Mammary epithelial cell (primary cell): ENCODE measurements at regions of chr11 and their contacts with region 1.

Region 1: DNA sequence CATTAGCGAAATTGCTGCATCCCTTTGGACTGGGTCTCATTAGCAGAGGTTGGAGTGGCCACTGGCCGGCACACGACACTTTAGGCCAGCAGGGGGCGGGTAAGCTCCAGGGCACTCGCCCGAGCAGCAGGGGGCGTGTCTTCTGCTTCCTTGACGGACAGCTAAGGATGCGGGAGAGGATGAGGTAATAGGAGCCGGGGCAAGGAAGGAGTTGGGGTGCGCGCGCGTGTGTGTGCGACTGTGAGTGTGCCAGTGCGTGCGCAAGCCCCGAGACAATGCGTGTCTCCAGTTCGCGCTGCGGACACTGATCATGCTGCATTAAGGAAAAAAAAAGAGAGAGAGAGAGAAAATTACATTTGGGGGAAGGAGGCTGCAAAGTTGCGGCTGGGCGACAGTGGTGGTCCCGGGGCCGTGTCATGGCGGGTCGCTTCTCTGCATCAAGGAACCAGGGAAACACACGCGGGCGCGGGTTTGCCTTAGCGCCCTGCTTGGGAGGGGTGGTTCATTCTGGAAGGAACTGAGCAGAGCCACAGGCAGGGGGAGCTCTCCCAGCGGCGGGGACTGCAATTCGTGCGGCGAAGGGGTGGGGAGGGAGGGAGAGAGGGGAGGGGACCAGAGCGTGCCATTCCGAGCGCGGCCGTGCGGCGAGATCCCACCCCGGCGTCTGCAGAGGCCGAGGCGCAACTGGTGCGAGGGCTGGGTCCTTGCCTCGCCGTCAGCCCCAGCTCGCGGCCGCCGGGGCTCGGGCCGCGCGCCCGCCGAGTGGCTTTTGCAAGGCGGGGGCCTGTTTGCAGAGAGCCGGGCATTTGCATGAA is at the start of gene DTX4:
- DNase-seq: peak; percentile 76
- H3K4me3 ChIP-seq: peak within 1 kb of the TSS; percentile 63 to 70 (median 64)
- H3K27ac ChIP-seq: peak within 1 kb of the TSS; percentile 92
- H3K4me1 ChIP-seq: peaks cover 42% of the 10 kb centered on the region
- H3K27me3 ChIP-seq: no peaks in the 10 kb centered on the region
- CTCF ChIP-seq: peak; percentile 85 to 86
- total RNA-seq, gene DTX4: 10.4 to 11.5 TPM

Region 2: DNA sequence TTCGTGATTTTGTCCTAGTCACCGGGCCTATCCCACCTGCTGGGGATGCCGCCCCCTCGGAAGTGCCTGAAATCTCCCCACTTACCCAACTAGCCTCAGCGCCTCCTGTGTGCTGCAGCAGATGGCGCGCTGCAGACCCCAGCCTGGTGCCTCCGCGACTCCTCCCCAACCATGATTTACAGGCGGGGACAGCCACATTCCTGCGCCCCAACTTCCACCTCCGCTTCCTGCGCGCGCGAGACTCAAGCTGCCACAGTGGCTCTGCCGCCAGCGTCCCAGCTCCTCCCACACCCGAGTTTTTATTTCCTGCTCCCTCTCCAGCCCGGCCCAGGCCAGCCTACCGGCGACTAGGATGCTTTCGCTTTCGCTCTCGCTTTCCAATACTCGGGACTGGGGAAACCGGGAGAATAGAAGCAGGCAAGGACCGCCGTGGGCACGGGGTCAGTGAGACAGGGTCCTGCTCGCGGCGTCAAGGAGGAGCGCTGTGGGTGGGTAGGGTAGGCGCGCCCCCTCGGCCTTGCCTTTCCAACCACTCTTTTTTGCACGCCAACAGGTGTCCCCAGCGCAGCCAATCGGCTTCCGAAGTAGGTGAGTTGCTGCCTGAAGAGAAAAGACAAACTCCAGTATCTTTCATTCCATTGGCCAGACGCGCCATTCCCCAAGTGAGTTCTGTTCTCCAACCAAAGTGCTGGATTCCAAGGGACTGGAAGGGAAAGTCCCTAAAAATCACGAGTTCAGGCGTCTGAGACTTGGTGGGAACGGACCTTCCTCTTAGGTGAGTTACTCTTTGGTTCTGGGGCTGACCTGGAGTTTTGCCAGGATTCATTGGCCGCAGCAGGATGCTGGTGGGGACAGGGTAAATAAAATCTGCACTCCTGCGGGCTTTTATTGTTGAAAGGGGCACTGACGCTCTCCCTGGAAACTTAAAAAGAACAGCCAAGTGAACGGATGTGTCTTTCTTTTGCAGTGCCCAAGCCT is 28.9 kb before region 1 on chr11 and contains the start of gene FAM111A:
- CTCF ChIA-PET with region 1: interaction called, 3 read pairs
- dilution Hi-C with region 1: no loop called
- in situ Hi-C with region 1: no loop called
- intact Hi-C with region 1: loop called (anchors 2 kb)
- DNase-seq: peak; percentile 97
- H3K4me3 ChIP-seq: peak within 1 kb of the TSS; percentile 77 to 88 (median 78)
- H3K27ac ChIP-seq: peak within 1 kb of the TSS; percentile 91
- H3K4me1 ChIP-seq: peaks cover 20% of the 10 kb centered on the region
- H3K27me3 ChIP-seq: no peaks in the 10 kb centered on the region
- CTCF ChIP-seq: peak in 1 of 2 donors; percentile 35
- total RNA-seq, gene FAM111A: 17.8 to 35.8 TPM

Region 3: DNA sequence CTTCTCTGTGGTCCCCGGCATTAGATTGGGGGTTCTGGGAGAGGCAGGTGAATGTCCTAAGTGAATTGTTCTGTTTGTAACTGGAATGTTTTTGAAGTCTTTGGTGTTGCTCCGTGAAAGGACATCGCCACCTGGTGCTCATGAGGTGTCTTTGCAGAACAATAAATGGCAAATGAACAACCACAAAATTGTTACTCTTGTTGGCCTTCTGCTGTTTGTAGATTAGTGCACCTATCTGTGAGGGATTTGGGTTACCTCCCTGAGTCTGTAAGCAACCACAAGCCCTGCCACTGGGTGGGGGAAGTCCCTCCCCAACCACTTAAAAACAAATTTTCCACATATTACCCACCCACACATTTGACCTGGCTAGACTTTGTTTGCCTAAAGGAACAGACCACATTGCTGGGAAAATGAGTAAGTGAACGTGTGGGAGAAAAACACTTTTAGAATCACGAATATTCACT is 36.3 kb after region 1 on chr11:
- CTCF ChIA-PET with region 1: interaction called, 14 read pairs
- dilution Hi-C with region 1: no loop called
- in situ Hi-C with region 1: loop called in 1 of 2 experiments (anchors 5 kb)
- intact Hi-C with region 1: loop called (anchors 1 kb)
- DNase-seq: peak; percentile 74
- H3K4me3 ChIP-seq: no peak overlapping the region
- H3K27ac ChIP-seq: no peak overlapping the region
- H3K4me1 ChIP-seq: peaks cover 7% of the 10 kb centered on the region
- H3K27me3 ChIP-seq: no peaks in the 10 kb centered on the region
- CTCF ChIP-seq: peak; percentile 64 to 76

Region 4: DNA sequence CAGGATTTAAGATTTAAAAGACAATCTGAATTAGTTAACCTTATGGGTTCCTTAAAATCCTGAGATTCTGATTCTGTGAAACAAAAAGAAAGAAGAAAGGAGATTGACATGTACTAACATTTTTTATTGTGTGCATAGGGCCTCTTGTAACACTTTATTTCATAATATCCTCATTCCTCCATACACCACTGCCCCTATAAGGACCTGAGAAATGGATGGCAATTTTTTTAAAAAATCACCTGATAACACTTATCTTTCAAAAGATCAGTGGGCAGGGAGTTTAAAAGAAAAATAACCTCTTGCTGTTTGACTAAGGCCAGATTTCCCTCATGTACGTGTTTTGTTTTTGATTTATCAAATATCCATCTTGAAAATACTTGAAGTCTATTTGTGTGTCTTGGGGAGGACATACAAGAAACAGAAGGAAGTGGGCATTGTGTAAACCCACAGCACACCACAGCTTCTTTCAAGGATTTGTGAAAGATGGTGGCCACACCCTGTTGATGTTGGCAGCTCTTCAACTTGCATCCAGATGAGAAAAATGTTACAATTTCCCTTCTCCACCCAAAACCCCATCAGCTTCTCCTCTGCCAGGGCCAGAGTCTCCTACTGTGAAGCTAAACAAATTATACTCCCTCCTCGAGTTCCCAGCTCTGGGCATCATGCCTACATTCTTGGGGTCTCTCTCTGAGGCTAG is 76.0 kb after region 1 on chr11:
- CTCF ChIA-PET with region 1: no interaction called
- dilution Hi-C with region 1: no loop called
- in situ Hi-C with region 1: no loop called
- intact Hi-C with region 1: no loop called
- DNase-seq: peak; percentile 57
- H3K4me3 ChIP-seq: no peak overlapping the region
- H3K27ac ChIP-seq: no peak overlapping the region
- H3K4me1 ChIP-seq: peaks cover 14% of the 10 kb centered on the region
- H3K27me3 ChIP-seq: no peaks in the 10 kb centered on the region
- CTCF ChIP-seq: no peak

Region 5: GRCh38 chr11:59283825-59284772 is 112.4 kb after region 1 on chr11:
- CTCF ChIA-PET with region 1: no interaction called
- dilution Hi-C with region 1: no loop called
- in situ Hi-C with region 1: loop called (anchors 10 to 25 kb)
- intact Hi-C with region 1: loop called (anchors 1 kb)
- DNase-seq: peak; percentile 31
- H3K4me3 ChIP-seq: no peak overlapping the region
- H3K27ac ChIP-seq: no peak overlapping the region
- H3K4me1 ChIP-seq: no peaks in the 10 kb centered on the region
- H3K27me3 ChIP-seq: no peaks in the 10 kb centered on the region
- CTCF ChIP-seq: peak; percentile 59 to 80

Region 6: DNA sequence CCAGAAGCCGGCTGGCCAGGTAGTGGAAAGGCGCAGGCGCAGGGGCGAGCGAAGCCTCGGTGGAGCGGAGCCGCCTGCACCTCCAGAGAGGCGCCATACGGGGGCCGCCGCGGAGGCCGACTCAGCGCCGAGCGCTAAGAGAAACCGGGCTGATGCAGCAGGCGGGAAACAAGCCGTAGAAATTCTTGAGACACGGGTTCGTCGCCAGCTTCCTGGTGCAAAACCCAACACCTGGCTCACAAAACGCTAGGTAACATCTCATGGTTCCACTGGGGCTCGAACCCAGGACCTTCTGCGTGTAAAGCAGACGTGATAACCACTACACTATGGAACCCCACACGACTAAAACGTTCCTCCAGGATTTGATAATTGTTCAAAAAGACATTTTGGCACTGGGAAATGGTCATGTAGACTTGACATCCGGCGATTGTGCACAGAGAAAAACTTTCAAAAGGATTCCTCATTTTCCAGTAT is 378.7 kb after region 1 on chr11:
- CTCF ChIA-PET with region 1: no interaction called
- dilution Hi-C with region 1: no loop called
- in situ Hi-C with region 1: no loop called
- intact Hi-C with region 1: loop called (anchors 5 kb)
- DNase-seq: peak; percentile 97
- H3K4me3 ChIP-seq: peak overlapping the region; percentile 51 to 69 (median 62)
- H3K27ac ChIP-seq: peak overlapping the region; percentile 52
- H3K4me1 ChIP-seq: peaks cover 9% of the 10 kb centered on the region
- H3K27me3 ChIP-seq: no peaks in the 10 kb centered on the region
- CTCF ChIP-seq: peak; percentile 28 to 62